ENCODE measurements at regions of chr19 and their contacts with region 1.

Region 1: GRCh38 chr19:18322759-18323460 is at the start of gene LSM4:
- DNase-seq: peak; percentile 98
- H3K4me3 ChIP-seq: peak within 1 kb of the TSS; percentile 43 to 76 (median 71)
- H3K27ac ChIP-seq: peak within 1 kb of the TSS; percentile 73
- H3K4me1 ChIP-seq: peaks cover 50% of the 10 kb centered on the region
- H3K27me3 ChIP-seq: no peaks in the 10 kb centered on the region
- CTCF ChIP-seq: peak; percentile 5 to 38
- POLR2A ChIP-seq: no peak
- total RNA-seq, gene LSM4: 103 and 118 TPM in 2 replicates

Region 2: GRCh38 chr19:18291590-18292461 is 31.1 kb before region 1 on chr19:
- CTCF ChIA-PET with region 1: interaction called, 7 read pairs
- POLR2A ChIA-PET with region 1: interaction called, 6 read pairs
- dilution Hi-C with region 1: no loop called
- intact Hi-C with region 1: loop called (anchors 1 kb)
- DNase-seq: peak; percentile 72
- H3K4me3 ChIP-seq: peak overlapping the region; percentile 52 to 78 (median 56)
- H3K27ac ChIP-seq: peak overlapping the region; percentile 77
- H3K4me1 ChIP-seq: peaks cover 16% of the 10 kb centered on the region
- H3K27me3 ChIP-seq: no peaks in the 10 kb centered on the region
- CTCF ChIP-seq: no peak
- POLR2A ChIP-seq: peak; percentile 35

Measured in endothelial cell of umbilical vein (primary cell).